Dorsolateral prefrontal cortex (tissue), 120 donors: ENCODE measurements at regions of chr5 and their contacts with region 1.

Region 1: GRCh38 chr5:176609724-176610434 is at the start of gene GPRIN1:
- DNase-seq: peak in 2 of 10 donors; percentile 78 to 84
- H3K4me3 ChIP-seq: peak within 1 kb of the TSS; percentile 45 to 76 (median 66)
- H3K27ac ChIP-seq: peak within 1 kb of the TSS in 43 of 59 donors; percentile 28 to 85 (median 66)
- H3K27me3 ChIP-seq: no peaks in the 10 kb centered on the region
- CTCF ChIP-seq: peak in 48 of 56 donors; percentile 13 to 57 (median 35)
- total RNA-seq, gene GPRIN1: 13.1 to 60.8 (median 43.9) TPM

Region 2: GRCh38 chr5:176537608-176538504 is 72.0 kb before region 1 on chr5:
- intact Hi-C with region 1: no loop called
- DNase-seq: peak; percentile 98 to 100 (median 100)
- H3K4me3 ChIP-seq: peak overlapping the region; percentile 72 to 100 (median 92)
- H3K27ac ChIP-seq: peak overlapping the region; percentile 74 to 100 (median 98)
- H3K27me3 ChIP-seq: no peaks in the 10 kb centered on the region
- CTCF ChIP-seq: peak in 10 of 56 donors; percentile 12 to 38 (median 14)

Region 3: GRCh38 chr5:176573564-176574296 is 36.1 kb before region 1 on chr5:
- intact Hi-C with region 1: loop called in 1 of 2 experiments (anchors 5 kb)
- DNase-seq: peak; percentile 67 to 85 (median 80)
- H3K4me3 ChIP-seq: no peak overlapping the region
- H3K27ac ChIP-seq: no peak overlapping the region
- H3K27me3 ChIP-seq: peaks cover 0 to 17% (median 0%) of the 10 kb centered on the region in 45 donors
- CTCF ChIP-seq: peak; percentile 59 to 96 (median 84)

Region 4: DNA sequence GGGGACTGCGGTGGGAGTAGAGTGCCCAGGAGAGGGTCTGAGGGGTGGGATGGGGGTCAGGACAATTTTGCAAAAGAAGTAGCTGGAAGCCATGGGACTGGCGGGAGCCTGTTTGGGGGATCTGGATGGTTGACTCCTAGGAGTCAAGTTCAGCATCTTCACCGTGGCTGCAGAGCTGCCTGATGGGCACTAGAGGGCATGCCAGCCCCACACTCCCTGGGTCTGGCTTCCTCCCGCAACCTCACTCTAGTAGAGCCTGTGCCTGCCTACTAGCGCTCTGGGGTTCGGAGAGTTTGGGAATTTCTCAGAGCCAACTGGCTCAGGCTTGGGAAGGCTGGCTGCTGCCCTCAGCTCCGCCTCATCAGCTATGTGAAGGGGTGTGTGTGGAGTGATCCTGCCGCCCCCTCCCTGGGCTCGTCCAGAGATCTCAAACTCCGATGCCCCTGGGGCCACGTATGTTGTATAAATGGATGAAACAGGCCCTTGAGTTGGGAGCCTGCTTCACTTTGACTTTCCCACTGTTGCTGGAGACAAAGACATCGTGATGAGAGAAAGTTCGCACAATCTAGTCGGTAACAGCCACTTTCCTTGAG is 48.2 kb after region 1 on chr5:
- intact Hi-C with region 1: no loop called
- DNase-seq: peak; percentile 56 to 87 (median 81)
- H3K4me3 ChIP-seq: no peak overlapping the region
- H3K27ac ChIP-seq: peak overlapping the region in 37 of 59 donors; percentile 7 to 92 (median 64)
- H3K27me3 ChIP-seq: no peaks in the 10 kb centered on the region
- CTCF ChIP-seq: peak; percentile 50 to 92 (median 85)